Panc1 (cell line): ENCODE measurements at regions of chr2 and their contacts with region 1.

Region 1: DNA sequence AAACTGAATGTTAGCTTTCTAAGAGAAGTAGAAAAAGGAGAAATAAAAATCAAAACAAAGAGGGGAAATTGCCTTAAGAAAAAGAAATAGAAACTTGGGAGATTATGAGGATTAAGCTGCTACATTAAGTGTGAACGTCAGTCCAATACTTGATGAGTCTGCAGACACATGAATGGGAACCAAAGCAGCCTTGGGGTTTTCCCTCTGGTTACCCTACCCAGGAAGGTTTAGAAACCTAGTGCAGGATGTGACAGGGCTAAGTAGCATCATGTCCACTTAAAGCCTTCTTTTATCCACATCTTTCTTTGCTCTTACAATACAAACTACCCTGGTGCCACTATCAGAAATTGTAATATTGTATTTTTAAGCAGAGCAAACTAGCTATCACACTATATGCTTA is 22.3 kb downstream of the SLC35F5 start:
- DNase-seq: no peak
- ATAC-seq: no peak
- H3K4me3 ChIP-seq: no peak overlapping the region
- H3K27ac ChIP-seq: no peak overlapping the region
- H3K4me1 ChIP-seq: no peaks in the 10 kb centered on the region
- H3K27me3 ChIP-seq: no peaks in the 10 kb centered on the region
- CTCF ChIP-seq: no peak

Region 2: GRCh38 chr2:113784823-113785744 is 50.9 kb after region 1 on chr2:
- CTCF ChIA-PET with region 1: no interaction called
- POLR2A ChIA-PET with region 1: interaction called, 12 read pairs
- in situ Hi-C with region 1: no loop called
- intact Hi-C with region 1: no loop called
- DNase-seq: no peak
- ATAC-seq: no peak
- H3K4me3 ChIP-seq: no peak overlapping the region
- H3K27ac ChIP-seq: no peak overlapping the region
- H3K4me1 ChIP-seq: no peaks in the 10 kb centered on the region
- H3K27me3 ChIP-seq: no peaks in the 10 kb centered on the region
- CTCF ChIP-seq: no peak